Mammary epithelial cell (primary cell): ENCODE measurements at regions of chr3 and their contacts with region 1.

Region 1: DNA sequence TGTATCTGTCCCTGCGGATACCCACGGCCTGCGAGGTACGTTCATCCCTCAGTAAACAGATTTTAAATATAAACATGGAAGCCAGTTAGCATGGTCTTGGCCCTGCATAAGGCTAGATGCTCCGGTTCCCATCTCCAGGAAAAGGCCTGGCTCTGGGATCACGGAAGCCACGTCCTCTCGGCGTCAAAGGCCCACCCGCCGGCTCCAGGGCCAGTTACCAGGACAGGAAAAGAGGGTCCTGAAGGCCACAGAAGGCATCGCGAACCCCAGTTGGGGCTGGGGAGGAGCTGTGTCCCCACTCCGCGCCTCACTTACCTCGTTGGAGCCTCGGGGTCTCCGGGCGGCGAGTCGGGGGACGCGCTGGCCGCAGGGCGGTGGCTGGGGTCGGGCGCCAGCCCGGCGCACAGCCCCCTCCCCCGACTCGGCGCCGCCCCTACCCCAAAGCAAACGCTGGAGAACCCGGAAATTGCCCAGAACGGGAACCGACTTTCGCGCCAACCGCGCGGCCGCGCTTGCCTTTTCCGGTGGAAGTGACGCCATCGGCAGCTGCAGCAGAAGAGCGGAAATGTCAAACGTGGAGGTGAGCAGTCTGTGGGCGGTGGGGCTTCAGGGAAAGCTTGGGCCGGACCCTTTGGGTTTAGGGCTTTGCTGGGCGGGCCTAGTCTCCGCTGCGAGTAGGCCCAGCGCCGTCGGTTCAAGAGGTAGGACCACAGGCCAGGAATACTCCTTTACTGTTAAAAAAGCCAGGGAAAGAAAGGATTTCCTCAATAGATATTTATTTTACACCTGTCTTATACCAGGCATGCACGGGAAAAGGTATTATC is at the start of gene TOPBP1:
- DNase-seq: peak; percentile 68
- H3K4me3 ChIP-seq: peak within 1 kb of the TSS; percentile 54 to 93 (median 90)
- H3K27ac ChIP-seq: peak within 1 kb of the TSS; percentile 86
- H3K4me1 ChIP-seq: peaks cover 27% of the 10 kb centered on the region
- H3K27me3 ChIP-seq: no peaks in the 10 kb centered on the region
- CTCF ChIP-seq: no peak
- total RNA-seq, gene TOPBP1: 23.9 to 25.8 TPM

Region 2: GRCh38 chr3:133712017-133712416 is 50.4 kb after region 1 on chr3:
- CTCF ChIA-PET with region 1: no interaction called
- dilution Hi-C with region 1: no loop called
- in situ Hi-C with region 1: no loop called
- intact Hi-C with region 1: no loop called
- DNase-seq: no peak
- H3K4me3 ChIP-seq: no peak overlapping the region
- H3K27ac ChIP-seq: no peak overlapping the region
- H3K4me1 ChIP-seq: no peaks in the 10 kb centered on the region
- H3K27me3 ChIP-seq: peaks cover 5% of the 10 kb centered on the region
- CTCF ChIP-seq: no peak

Region 3: DNA sequence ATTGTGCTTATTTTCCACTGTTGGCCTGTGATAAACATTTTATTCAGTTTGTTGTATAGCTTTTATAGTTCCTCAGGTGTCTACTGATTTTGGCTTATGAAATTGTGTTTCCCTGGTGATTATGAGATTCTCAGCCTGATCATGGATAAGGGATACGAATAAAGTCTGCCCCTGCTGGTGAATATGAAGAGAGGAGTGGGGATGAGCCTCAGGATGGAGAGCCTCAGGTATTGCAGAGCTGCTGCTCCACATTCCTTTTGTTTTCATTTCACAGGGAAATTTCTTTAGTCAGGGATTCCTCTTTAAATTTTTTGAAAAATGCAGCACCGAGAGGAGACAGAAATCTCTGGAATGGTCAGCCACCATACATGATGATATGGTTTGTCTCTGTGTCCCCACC is 248.8 kb after region 1 on chr3:
- CTCF ChIA-PET with region 1: no interaction called
- dilution Hi-C with region 1: no loop called
- in situ Hi-C with region 1: loop called in 1 of 2 experiments (anchors 25 kb)
- intact Hi-C with region 1: loop called (anchors 5 kb)
- DNase-seq: no peak
- H3K4me3 ChIP-seq: no peak overlapping the region
- H3K27ac ChIP-seq: no peak overlapping the region
- H3K4me1 ChIP-seq: no peaks in the 10 kb centered on the region
- H3K27me3 ChIP-seq: peaks cover under 1% of the 10 kb centered on the region
- CTCF ChIP-seq: peak; percentile 34 to 39